ENCODE measurements at regions of chr5 and their contacts with region 1.

Region 1: GRCh38 chr5:78699565-78700241 is 51.1 kb upstream of the LHFPL2 start:
- DNase-seq: peak; percentile 92
- H3K4me3 Mint-ChIP-seq: peak overlapping the region; percentile 50
- H3K27ac Mint-ChIP-seq: peak overlapping the region; percentile 98
- H3K4me1 Mint-ChIP-seq: peaks cover 56% of the 10 kb centered on the region
- H3K27me3 Mint-ChIP-seq: no peaks in the 10 kb centered on the region
- CTCF ChIP-seq: no peak

Region 2: DNA sequence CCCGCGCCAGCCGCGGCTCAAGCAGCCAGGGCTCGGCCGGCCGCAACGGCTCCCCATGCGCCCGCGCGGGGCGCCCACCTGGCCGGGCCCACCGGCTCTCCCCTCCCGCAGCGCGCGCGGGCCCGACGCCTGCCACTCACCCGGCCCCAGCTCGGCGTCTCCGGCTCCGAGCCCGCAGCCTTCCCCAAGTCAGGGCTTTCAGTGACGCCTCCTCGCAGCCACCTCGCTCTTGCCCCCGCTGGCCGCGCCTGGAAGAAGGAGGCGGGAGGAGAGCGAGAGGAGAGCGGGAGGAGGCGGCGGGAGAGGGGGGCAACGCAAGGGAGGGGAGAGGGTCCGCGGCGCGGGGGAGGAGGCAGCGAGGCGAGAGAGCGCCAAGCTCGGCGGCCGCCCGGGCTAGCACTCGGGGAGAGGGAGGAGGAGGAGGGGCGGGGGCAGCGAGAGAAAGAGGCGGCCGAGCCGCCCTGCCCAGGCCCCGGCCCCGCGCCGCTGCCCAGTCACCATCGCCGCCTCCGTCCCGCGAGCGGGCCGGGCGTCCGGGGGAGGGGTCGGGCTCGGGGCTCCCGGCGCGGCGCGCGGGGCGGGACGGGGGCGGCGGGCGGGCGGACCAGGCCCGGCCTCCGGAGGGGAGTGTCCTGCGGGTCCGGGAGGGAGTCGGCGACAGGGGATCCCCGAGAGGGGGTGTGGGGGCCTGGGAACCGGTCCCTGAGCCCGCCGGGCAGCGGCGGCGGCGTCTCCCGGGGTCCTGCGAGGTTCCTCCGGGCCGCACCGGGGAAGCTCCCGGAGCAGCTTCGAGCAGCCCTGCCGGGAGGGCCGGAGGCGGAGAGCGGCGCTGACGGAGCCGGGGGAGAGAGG is 51.1 kb before region 1 on chr5 and contains the start of gene LHFPL2:
- CTCF ChIA-PET with region 1: interaction called, 10 read pairs
- intact Hi-C with region 1: no loop called
- DNase-seq: peak; percentile 86
- H3K4me3 Mint-ChIP-seq: peak within 1 kb of the TSS; percentile 92
- H3K27ac Mint-ChIP-seq: peak within 1 kb of the TSS; percentile 82
- H3K4me1 Mint-ChIP-seq: peaks cover 39% of the 10 kb centered on the region
- H3K27me3 Mint-ChIP-seq: no peaks in the 10 kb centered on the region
- CTCF ChIP-seq: peak; percentile 11
- total RNA-seq, gene LHFPL2: 30.9 and 43.6 TPM in 2 replicates